Sciatic nerve (tissue), 2 donors: ENCODE measurements at regions of chr20 and their contacts with region 1.

Region 1: GRCh38 chr20:8131598-8132483 is at the start of gene PLCB1:
- DNase-seq: peak; percentile 91
- ATAC-seq: peak; percentile 98
- total RNA-seq, gene PLCB1: 58.5 TPM

Region 2: GRCh38 chr20:6956574-6956973 is 1175.3 kb before region 1 on chr20:
- intact Hi-C with region 1: no loop called
- DNase-seq: no peak
- ATAC-seq: no peak

Region 3: DNA sequence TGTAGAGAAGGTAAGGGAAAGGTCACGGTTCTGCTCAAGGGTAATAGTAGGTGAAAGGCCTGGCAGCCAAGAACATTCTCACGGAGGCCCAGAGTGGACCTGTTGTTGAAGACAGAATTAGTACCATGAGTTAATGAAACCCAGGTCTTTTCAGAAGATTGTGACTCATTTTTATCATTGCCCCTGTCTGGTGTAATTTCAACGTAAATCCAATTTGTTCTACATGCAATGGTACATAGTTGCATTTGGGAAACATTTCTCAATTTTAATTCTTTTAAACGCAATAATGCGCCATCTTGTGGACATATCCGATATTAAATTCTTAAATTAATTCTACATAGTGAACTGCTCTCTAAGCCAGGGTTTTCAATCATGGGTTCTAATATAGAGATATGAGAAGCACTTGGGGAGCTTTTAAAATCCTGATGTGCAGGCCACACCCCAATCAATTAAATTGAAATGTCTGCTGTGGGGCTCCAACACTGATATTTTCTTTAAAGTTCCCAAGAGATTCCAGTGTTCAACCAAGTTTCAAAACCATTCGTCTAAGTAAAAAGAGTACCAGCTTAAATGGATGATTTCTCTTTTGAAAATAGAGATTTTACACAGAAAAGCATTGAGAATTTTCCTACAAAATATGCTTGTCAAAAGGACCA is 257.7 kb after region 1 on chr20:
- intact Hi-C with region 1: loop called (anchors 10 kb)
- DNase-seq: no peak
- ATAC-seq: peak; percentile 79

Region 4: GRCh38 chr20:8718279-8718678 is 586.4 kb after region 1 on chr20:
- intact Hi-C with region 1: loop called (anchors 5 kb)
- DNase-seq: peak; percentile 75
- ATAC-seq: peak; percentile 37